BJ (cell line): ENCODE measurements at regions of chr1 and their contacts with region 1.

Region 1: GRCh38 chr1:57424231-57425027 is 569 bp upstream of the DAB1 start:
- DNase-seq: no peak
- H3K4me3 ChIP-seq: peak overlapping the region; percentile 62
- H3K27me3 ChIP-seq: peaks cover 3% of the 10 kb centered on the region; the same call in 1 of the 2 replicates
- CTCF ChIP-seq: peak; percentile 93

Region 2: DNA sequence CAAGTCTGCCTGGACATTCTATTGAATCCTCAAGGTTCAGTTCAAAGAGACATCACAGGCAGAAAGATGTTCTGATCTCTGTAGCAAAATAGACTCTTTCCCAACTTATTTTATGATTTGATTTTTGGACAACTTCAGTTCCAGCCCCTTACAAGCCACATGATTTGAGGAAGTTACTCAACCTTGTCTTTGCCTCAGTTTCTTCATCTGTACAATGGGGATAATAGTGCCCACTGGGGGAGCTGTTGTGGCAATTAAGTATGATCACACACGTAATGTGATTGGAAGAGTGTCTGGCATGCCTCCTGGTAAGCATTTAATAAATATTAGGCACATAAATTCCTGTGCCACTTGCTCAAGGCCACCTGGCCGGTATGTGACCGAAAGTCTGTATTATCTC is 131.2 kb before region 1 on chr1:
- CTCF ChIA-PET with region 1: no interaction called
- POLR2A ChIA-PET with region 1: no interaction called
- DNase-seq: no peak
- H3K4me3 ChIP-seq: no peak overlapping the region
- H3K27me3 ChIP-seq: no peaks in the 10 kb centered on the region
- CTCF ChIP-seq: no peak

Region 3: GRCh38 chr1:58013237-58013636 is 588.8 kb after region 1 on chr1:
- CTCF ChIA-PET with region 1: no interaction called
- POLR2A ChIA-PET with region 1: interaction called, 12 read pairs
- DNase-seq: no peak
- H3K4me3 ChIP-seq: no peak overlapping the region
- H3K27me3 ChIP-seq: no peaks in the 10 kb centered on the region
- CTCF ChIP-seq: no peak